Heart left ventricle (tissue), 16 donors: ENCODE measurements at regions of chr11 and their contacts with region 1.

Region 1: DNA sequence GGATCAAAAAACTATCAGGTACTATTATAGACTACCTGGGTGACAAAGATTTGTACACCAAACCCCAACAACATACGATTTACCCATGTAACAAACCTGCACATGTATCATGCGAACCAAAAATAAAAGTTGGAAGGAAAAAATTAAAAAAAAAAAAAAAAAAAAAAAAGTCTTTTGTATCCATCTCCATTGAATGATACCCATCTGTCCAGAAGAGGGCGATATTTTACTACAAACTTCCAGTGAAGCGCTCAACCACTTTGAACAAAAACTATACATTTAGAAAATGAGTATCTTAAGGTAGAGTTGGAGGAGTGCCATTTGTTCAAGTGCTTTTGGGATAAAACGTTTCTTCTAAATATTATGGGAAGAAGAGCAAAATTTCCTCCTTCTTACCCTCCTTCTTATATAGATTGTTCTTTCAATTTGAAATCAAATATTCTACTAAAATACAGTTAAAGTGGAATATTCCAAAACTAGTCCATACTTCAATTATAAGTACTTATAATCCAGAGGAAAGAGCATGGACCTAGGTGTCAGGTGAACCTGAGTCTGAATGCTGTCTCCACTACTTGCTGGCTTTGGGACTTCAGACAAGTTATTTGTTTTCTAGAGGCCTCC is 23.3 kb downstream of the ARL14EP start:
- DNase-seq: no peak
- ATAC-seq: peak in 1 of 4 donors; percentile 36
- H3K4me3 ChIP-seq: no peak overlapping the region
- H3K27ac ChIP-seq: no peak overlapping the region
- H3K4me1 ChIP-seq: peaks cover 0 to 4% (median 0%) of the 10 kb centered on the region in 12 donors
- H3K27me3 ChIP-seq: no peaks in the 10 kb centered on the region
- CTCF ChIP-seq: peak; percentile 44 to 80 (median 70)
- POLR2A ChIP-seq: no peak

Region 2: GRCh38 chr11:30478923-30479322 is 132.7 kb after region 1 on chr11:
- intact Hi-C with region 1: loop called in 1 of 10 experiments (anchors 5 kb)
- DNase-seq: peak; percentile 62 to 85 (median 77)
- ATAC-seq: peak; percentile 92 to 95 (median 94)
- H3K4me3 ChIP-seq: peak overlapping the region in 1 of 12 donors; percentile 0
- H3K27ac ChIP-seq: peak overlapping the region; percentile 43 to 82 (median 64)
- H3K4me1 ChIP-seq: peaks cover 8 to 73% (median 33%) of the 10 kb centered on the region in 12 donors
- H3K27me3 ChIP-seq: no peaks in the 10 kb centered on the region
- CTCF ChIP-seq: no peak
- POLR2A ChIP-seq: peak in 1 of 2 donors; percentile 19

Region 3: GRCh38 chr11:30653606-30654005 is 307.4 kb after region 1 on chr11:
- intact Hi-C with region 1: loop called in 6 of 10 experiments (anchors 5 to 10 kb)
- DNase-seq: no peak
- ATAC-seq: no peak
- H3K4me3 ChIP-seq: no peak overlapping the region
- H3K27ac ChIP-seq: no peak overlapping the region
- H3K4me1 ChIP-seq: no peaks in the 10 kb centered on the region
- H3K27me3 ChIP-seq: no peaks in the 10 kb centered on the region
- CTCF ChIP-seq: peak in 3 of 12 donors; percentile 34 to 41 (median 36)
- POLR2A ChIP-seq: no peak

Region 4: GRCh38 chr11:30855383-30856006 is 509.3 kb after region 1 on chr11:
- intact Hi-C with region 1: loop called (anchors 1 to 5 kb)
- DNase-seq: no peak
- ATAC-seq: no peak
- H3K4me3 ChIP-seq: no peak overlapping the region
- H3K27ac ChIP-seq: no peak overlapping the region
- H3K4me1 ChIP-seq: peaks cover 0 to 4% (median 0%) of the 10 kb centered on the region in 12 donors
- H3K27me3 ChIP-seq: no peaks in the 10 kb centered on the region
- CTCF ChIP-seq: peak in 11 of 12 donors; percentile 32 to 73 (median 59)
- POLR2A ChIP-seq: no peak